Posterior vena cava (tissue), 2 donors: ENCODE measurements at regions of chr11 and their contacts with region 1.

Region 1: GRCh38 chr11:131168839-131169713 is 201.3 kb upstream of the NTM start:
- DNase-seq: no peak

Region 2: DNA sequence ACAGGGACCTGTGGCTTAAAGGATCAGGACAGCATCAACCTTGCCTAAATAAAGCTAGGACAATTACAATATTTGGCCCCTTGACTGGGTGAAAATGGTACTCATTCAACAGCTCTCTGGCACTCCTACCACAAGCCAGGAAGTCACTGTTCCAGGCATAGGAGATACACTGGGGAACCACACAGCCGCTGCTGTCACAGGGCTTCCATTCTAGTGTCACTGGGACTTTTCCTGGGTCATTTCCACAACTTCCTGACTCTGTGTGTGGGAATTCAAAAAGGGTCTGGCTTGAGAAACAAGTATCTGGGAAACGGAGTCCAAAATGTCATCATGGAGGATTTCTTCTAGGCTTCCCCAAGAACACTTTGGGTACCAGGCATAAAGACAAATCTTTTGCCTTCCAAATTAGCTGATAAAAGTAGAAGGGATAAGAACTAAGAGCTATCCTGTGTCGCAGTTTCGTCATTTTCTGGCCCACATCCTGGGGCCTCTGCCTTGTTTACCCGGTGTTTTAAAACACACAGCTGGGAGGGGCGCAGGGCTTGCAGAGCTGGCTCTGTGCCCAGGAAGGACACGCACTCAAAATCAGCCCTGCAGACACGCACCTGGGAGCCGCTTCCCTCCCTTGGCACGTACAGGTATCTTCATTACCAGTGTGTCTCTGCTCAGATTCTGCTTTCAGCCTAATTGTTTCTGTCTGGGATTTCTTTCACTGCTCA is 1315.4 kb before region 1 on chr11:
- intact Hi-C with region 1: no loop called
- DNase-seq: no peak

Region 3: DNA sequence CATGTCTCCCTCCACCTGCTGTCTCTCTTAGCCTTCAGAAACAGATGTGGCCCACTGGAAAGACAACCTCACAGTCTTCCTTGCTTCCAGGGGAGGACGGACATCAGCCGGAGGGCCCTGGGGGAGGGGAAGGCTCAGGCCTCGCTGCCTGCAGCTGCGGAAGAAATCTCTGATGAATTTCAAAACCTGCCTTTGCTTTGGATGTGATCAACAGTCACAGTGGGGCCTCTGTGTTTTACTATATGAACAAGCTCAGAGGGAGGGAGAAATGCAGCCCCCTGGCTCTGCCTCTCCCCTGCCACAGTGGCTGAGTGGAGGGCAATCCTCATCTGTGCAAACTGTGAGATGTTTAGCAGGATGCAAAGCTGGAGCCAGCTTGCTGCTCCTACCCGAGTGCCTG is 484.2 kb after region 1 on chr11:
- intact Hi-C with region 1: loop called in 1 of 2 experiments (anchors 2 kb)
- DNase-seq: no peak